HCT116 (cell line): ENCODE measurements at regions of chr4 and their contacts with region 1.

Region 1: DNA sequence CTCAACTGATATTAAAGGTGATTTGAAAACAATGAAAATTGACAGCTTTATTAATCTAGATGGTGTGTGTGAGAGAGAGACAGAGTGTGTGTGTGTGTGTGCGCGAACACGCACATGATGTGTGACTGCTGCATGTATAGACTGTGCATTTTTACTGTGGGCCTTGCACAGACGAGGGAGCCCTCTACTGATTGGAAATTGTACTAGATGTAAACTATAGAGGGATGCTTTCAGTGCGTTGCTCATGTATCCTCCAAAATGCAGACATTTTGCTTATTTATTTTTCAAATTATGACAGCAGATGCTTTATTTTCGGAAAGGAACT is 168.4 kb upstream of the GK2 start:
- DNase-seq: no peak
- ATAC-seq: peak; percentile 85
- H3K4me3 ChIP-seq: no peak overlapping the region
- H3K27ac ChIP-seq: no peak overlapping the region
- H3K4me1 ChIP-seq: no peaks in the 10 kb centered on the region
- H3K27me3 ChIP-seq: peaks cover 25% of the 10 kb centered on the region
- CTCF ChIP-seq: peak; percentile 25 to 47 (median 44); a peak in 4 of 6 replicates
- POLR2A ChIP-seq: no peak
- RAD21 ChIP-seq: peak; percentile 65

Region 2: GRCh38 chr4:78951862-78952472 is 624.4 kb before region 1 on chr4:
- CTCF ChIA-PET with region 1: no interaction called
- POLR2A ChIA-PET with region 1: no interaction called
- RAD21 ChIA-PET with region 1: no interaction called
- intact Hi-C with region 1: loop called (anchors 1 kb)
- DNase-seq: peak; percentile 32
- ATAC-seq: peak; percentile 81
- H3K4me3 ChIP-seq: no peak overlapping the region
- H3K27ac ChIP-seq: no peak overlapping the region
- H3K4me1 ChIP-seq: no peaks in the 10 kb centered on the region
- H3K27me3 ChIP-seq: no peaks in the 10 kb centered on the region
- CTCF ChIP-seq: peak; percentile 55 to 72 (median 57); a peak in 5 of 6 replicates
- POLR2A ChIP-seq: no peak
- RAD21 ChIP-seq: peak; percentile 83

Region 3: DNA sequence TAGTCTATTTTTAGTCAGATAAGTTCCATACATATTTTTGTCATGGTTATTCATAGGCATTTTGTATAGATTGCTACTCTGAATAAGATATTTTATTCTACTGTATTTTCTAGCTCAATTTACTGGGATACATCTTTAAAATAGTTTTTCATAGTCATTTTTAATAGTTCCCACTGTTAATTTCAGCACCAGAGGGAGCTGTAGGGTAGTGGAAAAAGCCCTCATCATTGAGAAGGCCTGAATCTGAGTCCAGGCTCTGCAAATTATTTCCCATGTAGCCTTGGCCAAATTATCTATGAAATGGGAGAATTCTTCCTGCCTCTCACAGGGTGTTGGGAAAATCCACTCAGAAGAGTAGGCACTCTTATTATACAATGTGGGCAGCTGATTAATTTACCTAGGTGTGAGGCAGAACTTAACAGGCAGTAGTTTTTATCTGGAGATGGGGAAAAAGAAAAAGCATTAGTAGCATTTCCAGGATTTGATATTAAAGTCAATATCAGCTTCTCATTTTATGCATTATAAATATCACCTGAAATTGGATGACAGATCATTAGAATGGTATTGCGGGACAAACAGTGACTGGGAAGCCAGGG is 534.2 kb before region 1 on chr4:
- CTCF ChIA-PET with region 1: interaction called, 4 read pairs
- POLR2A ChIA-PET with region 1: no interaction called
- RAD21 ChIA-PET with region 1: no interaction called
- intact Hi-C with region 1: loop called (anchors 2 kb)
- DNase-seq: peak; percentile 13
- ATAC-seq: peak; percentile 62
- H3K4me3 ChIP-seq: no peak overlapping the region
- H3K27ac ChIP-seq: no peak overlapping the region
- H3K4me1 ChIP-seq: no peaks in the 10 kb centered on the region
- H3K27me3 ChIP-seq: peaks cover 17% of the 10 kb centered on the region; the same call in 1 of the 2 replicates
- CTCF ChIP-seq: peak; percentile 31 to 65 (median 48); a peak in 4 of 6 replicates
- POLR2A ChIP-seq: no peak
- RAD21 ChIP-seq: peak; percentile 72

Region 4: GRCh38 chr4:79552311-79552710 is 24.1 kb before region 1 on chr4:
- CTCF ChIA-PET with region 1: no interaction called
- POLR2A ChIA-PET with region 1: no interaction called
- RAD21 ChIA-PET with region 1: no interaction called
- intact Hi-C with region 1: no loop called
- DNase-seq: no peak
- ATAC-seq: no peak
- H3K4me3 ChIP-seq: no peak overlapping the region
- H3K27ac ChIP-seq: no peak overlapping the region
- H3K4me1 ChIP-seq: no peaks in the 10 kb centered on the region
- H3K27me3 ChIP-seq: 0 out of 2 replicates have a peak, but pooled peaks cover 6% of the 10 kb centered on the region
- CTCF ChIP-seq: no peak
- POLR2A ChIP-seq: no peak
- RAD21 ChIP-seq: no peak